ENCODE measurements at regions of chr6 and their contacts with region 1.

Region 1: DNA sequence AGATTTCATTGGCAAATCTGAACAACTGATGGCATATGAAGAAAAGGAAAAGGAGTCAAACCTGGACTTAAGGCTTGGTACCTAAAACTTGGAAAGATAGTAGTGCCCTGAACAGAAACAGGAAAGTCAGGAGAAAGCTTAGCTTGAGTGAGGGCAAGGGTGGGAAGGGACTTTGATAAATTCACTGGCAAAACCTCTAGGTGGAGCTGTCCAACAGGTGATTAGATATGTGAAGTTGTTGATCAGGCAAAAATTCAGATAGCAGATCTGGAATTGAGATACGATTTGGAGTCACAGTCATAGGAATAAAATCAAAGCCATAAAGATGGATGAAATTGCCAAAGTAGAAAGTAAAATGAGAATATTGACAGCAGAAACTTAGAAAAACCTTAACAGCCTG is 16.1 kb upstream of the ZNF292 start:
- DNase-seq: no peak
- H3K4me3 ChIP-seq: no peak overlapping the region
- H3K27ac ChIP-seq: no peak overlapping the region
- H3K4me1 ChIP-seq: no peaks in the 10 kb centered on the region
- H3K27me3 ChIP-seq: no peaks in the 10 kb centered on the region
- CTCF ChIP-seq: peak in 2 of 3 experiments; percentile 61 to 80; a peak in 3 of 4 replicates
- EP300 ChIP-seq: no peak
- POLR2A ChIP-seq: no peak
- RAD21 ChIP-seq: peak; percentile 90 to 92

Region 2: DNA sequence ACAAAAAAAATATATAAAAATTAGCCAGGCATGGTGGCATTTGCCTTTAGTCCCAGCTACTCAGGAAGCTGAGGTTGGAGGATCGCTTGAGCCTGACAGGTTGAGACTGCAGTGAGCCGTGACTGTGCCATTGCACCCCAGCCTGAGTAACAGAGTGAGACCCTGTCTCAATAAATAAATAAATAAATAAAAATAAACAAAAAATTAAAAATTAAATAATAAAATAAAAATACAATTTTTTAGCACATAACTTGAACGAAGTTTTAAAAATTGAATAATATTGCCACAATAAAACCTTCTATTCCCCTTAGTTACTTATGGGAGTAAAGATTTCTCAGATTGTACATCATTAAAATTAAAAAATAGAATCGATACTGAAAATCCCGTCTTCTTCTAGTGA is 15.2 kb before region 1 on chr6:
- CTCF ChIA-PET with region 1: interaction called, 11 read pairs
- POLR2A ChIA-PET with region 1: no interaction called
- DNase-seq: no peak
- H3K4me3 ChIP-seq: no peak overlapping the region
- H3K27ac ChIP-seq: no peak overlapping the region
- H3K4me1 ChIP-seq: no peaks in the 10 kb centered on the region
- H3K27me3 ChIP-seq: no peaks in the 10 kb centered on the region
- CTCF ChIP-seq: no peak
- EP300 ChIP-seq: no peak
- POLR2A ChIP-seq: no peak
- RAD21 ChIP-seq: no peak

Region 3: DNA sequence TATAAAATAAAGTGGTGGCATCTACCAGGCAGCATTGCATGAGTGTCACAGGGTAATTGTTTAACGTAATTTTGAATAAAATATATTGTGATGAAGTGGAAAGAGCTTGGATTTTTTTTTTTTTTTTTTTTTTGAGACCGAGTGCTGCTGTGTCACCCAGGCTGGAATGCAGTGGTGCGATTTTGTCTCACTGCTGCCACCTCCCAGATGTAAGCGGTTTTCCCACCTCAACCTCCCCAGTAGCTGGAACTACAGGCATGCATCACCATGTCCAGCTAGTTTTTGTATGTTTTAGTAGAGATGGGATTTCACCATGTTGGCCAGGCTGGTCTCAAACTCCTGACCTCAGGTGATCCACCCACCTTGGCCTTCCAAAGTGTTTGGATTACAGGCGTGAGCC is 102.1 kb after region 1 on chr6:
- CTCF ChIA-PET with region 1: interaction called, 14 read pairs
- POLR2A ChIA-PET with region 1: no interaction called
- DNase-seq: no peak
- H3K4me3 ChIP-seq: no peak overlapping the region
- H3K27ac ChIP-seq: no peak overlapping the region
- H3K4me1 ChIP-seq: no peaks in the 10 kb centered on the region
- H3K27me3 ChIP-seq: no peaks in the 10 kb centered on the region
- CTCF ChIP-seq: peak in 2 of 3 experiments; percentile 15 to 35; a peak in 2 of 4 replicates
- EP300 ChIP-seq: no peak
- POLR2A ChIP-seq: no peak
- RAD21 ChIP-seq: peak; percentile 17 to 20; a peak in 2 of 4 replicates